ENCODE measurements at regions of chr6 and their contacts with region 1.

Region 1: DNA sequence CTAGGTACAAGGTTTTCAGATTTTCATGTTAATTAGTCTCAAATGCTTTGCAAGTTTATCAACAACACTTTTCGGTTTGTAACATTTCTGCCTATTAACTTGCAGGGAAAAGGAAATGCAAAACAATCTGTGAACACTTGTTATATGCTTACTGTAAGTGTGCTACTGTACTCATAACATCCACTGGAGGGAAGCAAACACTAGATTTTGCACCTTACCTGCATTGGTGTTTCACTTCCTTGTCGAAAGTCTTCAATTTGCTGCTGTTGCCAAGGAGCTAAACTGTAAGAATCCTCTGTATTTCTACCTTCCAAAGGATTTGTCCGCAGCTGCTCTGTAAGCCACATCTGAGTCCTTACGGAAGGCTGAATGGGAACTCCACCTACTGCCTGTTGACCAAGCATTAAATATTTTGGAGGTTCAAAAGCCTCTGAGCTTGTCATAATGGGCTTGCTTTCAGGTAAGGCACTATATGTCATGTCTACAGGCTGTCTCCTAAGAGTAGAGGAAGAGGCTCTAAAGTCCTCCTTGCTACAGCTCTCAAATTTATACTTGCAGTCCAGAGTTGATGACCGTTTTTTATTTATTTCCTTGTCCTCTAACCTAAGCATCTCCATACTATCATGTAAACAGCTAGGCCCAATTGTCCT is 17.3 kb downstream of the PLN start:
- DNase-seq: peak; percentile 80
- H3K4me3 Mint-ChIP-seq: no peak overlapping the region
- H3K27ac Mint-ChIP-seq: no peak overlapping the region
- H3K4me1 Mint-ChIP-seq: peaks cover 13% of the 10 kb centered on the region
- H3K27me3 Mint-ChIP-seq: no peaks in the 10 kb centered on the region

Region 2: GRCh38 chr6:118542184-118542952 is 23.1 kb before region 1 on chr6:
- intact Hi-C with region 1: no loop called
- DNase-seq: no peak
- H3K4me3 Mint-ChIP-seq: no peak overlapping the region
- H3K27ac Mint-ChIP-seq: no peak overlapping the region
- H3K4me1 Mint-ChIP-seq: peaks cover 3% of the 10 kb centered on the region
- H3K27me3 Mint-ChIP-seq: no peaks in the 10 kb centered on the region

Region 3: DNA sequence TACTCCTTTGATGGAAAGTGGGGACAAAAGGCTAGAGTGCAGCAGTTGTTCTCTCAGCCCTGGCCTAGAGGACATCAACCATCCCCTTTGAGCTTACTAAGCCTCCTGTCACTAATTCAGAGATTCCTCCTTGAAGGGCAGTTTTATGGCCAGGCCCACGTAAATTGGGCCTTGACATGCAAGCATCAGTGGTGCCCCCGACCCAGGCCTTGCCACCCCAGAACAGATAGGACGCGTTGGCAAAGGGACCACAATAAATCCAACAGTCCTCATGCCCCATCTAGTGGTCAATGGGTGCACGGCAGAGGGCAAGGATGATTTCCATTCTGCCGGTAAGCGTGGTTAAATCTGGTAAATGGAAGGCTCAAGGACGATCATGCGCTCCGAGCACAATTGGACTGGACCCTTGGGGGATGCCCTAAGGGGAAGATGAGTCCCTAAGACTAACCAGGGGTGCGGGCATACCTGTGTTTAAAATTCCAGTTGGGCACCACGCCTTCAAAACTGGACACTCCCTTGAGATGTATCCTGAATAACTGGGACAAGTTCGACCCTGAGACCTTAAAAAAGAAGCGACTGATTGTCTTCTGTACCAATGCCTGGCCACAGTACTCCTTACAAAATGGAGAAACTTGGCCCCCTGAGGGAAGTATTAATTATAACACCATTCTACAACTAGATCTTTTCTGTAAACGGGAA is 53.4 kb after region 1 on chr6:
- intact Hi-C with region 1: loop called (anchors 1 kb)
- DNase-seq: peak; percentile 86
- H3K4me3 Mint-ChIP-seq: no peak overlapping the region
- H3K27ac Mint-ChIP-seq: peak overlapping the region; percentile 9
- H3K4me1 Mint-ChIP-seq: peaks cover 28% of the 10 kb centered on the region
- H3K27me3 Mint-ChIP-seq: no peaks in the 10 kb centered on the region

Region 4: DNA sequence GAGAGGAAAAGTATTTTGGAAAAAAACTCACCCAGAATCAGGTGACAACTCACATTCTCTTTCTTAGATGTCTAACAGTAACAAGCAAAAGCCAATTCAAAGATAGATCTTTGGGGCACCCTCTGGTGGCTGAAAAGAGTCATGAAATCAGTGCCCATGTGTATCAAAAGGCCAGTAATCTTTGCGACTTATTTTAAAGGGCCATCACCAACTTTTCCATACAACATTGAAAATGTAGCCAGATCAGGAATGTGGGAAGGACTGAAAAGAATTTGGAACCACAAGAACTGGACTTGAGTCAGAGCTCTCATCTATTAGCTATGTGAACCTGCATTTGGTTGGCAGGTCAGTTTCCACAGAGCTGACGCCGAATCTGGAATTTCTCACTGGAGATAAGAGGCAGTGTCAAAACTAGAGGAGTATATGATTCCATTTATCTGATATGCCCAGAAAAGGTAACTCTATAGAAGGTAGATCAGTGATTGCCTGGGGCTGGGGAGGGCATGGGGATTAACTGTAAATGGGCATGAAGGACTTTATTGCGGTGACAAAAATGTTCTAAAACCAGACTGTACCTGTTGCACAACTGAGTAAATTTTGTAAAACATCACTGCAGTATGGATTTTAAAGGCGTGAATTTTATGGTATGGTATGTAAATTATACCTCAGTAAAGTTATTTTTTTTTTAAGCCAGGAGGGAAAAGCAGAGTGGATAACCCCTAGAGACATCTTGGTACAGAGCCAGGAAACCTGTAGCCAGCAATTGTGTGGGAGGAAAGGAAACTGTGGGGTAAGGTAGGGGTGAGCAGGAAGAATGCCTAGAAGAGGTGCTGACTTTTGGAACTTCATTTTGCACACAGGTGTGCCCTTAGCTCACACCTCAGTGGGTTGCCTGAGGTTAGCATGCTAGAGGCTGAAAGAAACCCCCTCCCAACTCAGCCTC is 211.4 kb after region 1 on chr6:
- intact Hi-C with region 1: loop called (anchors 1 kb)
- DNase-seq: peak; percentile 91
- H3K4me3 Mint-ChIP-seq: peak overlapping the region; percentile 35
- H3K27ac Mint-ChIP-seq: peak overlapping the region; percentile 59
- H3K4me1 Mint-ChIP-seq: peaks cover 15% of the 10 kb centered on the region
- H3K27me3 Mint-ChIP-seq: peaks cover 10% of the 10 kb centered on the region

Region 5: DNA sequence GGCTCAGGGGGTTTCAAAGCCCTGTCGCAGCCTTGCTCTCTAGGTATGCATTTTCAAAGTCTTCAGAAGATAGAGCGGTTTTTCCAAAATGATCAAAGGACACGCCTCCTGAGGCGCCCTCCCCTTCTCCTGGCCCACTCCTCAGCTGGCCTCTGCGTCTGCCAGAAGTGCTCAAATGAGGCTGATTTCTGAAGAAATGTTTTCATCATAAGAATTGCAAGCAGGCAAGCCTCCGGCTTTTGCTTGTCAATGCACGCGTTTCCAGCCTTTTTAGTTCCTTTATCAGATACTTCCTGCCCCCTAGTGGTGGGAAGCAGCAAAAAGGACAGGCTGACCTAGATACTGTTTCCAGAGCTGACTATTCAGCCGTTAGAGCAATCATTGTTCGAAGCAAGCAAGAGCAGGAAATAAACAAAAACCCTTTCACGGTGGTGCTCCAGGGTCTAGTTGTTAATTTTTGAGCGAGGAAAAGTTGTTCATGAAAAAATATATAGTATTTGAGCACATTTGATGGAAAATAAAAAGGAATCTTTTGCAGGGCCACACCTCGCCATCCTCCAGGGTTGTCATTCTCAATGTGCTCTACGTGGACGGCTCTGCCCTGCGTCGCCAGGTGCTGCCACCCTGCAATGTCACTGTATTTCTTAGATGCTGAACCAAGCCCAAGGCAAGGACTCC is 235.1 kb after region 1 on chr6:
- intact Hi-C with region 1: loop called (anchors 10 kb)
- DNase-seq: peak; percentile 95
- H3K4me3 Mint-ChIP-seq: peak overlapping the region; percentile 60
- H3K27ac Mint-ChIP-seq: peak overlapping the region; percentile 51
- H3K4me1 Mint-ChIP-seq: peaks cover 30% of the 10 kb centered on the region
- H3K27me3 Mint-ChIP-seq: no peaks in the 10 kb centered on the region

Measured in activated CD4-positive, alpha-beta T cell treated with anti-CD3 and anti-CD28 coated beads, Interleukin-2, amount 10 ng/mL, durations not matched to agents 24 days and 14 days (primary cell).